Aorta (tissue), 5 donors: ENCODE measurements at regions of chr5 and their contacts with region 1.

Region 1: DNA sequence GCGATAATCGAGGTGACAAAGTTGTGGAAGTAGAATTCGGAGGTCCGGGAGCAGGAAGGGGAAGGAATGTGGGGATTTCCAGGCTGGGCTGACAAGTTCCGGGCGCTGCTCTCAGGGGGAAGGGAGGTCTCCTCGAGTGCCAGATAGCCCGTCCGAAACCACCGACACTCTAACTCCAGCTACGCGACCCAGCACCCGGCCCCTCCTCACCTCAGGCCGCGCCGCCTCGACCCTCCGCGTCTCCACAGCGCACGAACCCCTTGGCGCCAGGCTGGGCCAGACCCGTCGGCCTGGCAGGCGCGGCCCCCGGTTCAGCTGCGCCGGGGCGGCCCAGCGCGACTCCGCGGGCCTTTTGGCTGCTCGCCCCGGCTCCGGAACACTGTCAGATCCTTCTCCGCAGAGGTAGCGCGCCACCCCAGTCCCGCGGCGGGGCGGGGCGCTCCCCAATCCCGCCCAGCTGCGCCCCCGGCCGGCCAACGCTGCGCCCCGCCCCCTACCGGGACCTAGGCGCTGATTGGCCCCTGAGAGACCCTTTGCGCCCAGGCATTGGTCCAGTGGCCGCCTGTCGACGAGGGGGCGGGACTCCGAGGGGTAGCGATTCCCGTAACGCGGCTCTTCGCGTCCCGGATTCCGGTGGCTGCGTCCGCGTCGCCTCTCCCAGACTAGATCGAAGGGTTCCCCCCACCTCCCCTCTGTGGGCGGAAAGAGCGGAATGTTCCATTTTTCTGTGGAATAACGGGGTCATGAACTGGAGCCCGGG is at the start of gene IL6ST:
- DNase-seq: peak; percentile 99
- ATAC-seq: peak; percentile 98
- H3K4me3 ChIP-seq: peak within 1 kb of the TSS; percentile 34 to 86
- H3K27ac ChIP-seq: peak within 1 kb of the TSS; percentile 94 to 96
- H3K4me1 ChIP-seq: peaks cover under 1 to 1% of the 10 kb centered on the region in 2 donors
- H3K27me3 ChIP-seq: no peaks in the 10 kb centered on the region
- total RNA-seq, gene IL6ST: 353 to 370 TPM

Region 2: DNA sequence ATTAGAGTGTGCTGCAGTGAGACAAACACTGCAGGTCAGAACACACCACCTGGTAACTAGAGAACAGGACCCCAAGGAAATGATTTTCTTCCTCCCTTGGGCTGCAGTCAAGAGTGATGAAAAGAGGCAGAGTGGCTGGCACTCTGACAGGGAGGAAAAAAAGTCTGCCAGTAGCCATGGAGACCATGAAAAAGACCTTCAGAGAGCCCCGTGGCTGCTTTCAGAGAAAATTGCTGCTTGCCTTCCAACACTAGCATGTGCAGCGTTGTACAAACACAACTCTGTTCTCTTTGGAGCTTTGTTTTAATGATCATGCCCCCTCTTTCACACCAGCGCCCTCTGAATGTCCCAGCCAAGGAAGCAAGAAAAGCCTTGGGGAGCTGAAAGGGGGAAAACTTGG is 169.6 kb after region 1 on chr5:
- intact Hi-C with region 1: loop called in 1 of 2 experiments (anchors 10 kb)
- DNase-seq: no peak
- ATAC-seq: peak; percentile 27
- H3K4me3 ChIP-seq: no peak overlapping the region
- H3K27ac ChIP-seq: no peak overlapping the region
- H3K4me1 ChIP-seq: no peaks in the 10 kb centered on the region
- H3K27me3 ChIP-seq: no peaks in the 10 kb centered on the region

Region 3: DNA sequence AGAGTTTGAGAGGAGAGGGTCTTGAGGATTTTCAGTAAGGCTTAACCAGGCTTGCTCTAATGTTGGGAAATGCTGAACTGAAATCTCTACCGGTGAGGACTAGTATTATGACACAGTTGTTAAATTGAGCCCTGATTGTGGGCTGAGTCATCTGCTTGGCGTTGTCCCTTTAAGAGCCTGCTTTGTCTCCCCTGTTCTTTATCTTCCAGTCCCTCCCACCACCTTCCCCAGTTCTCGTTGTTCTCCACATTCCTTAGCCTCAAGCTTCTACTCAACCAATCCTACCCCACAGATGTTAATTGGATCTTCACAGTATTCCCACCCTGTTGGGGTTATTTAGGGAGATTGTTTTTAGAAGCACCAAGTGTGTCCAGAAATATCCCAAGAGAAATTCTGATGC is 180.7 kb after region 1 on chr5:
- intact Hi-C with region 1: loop called in 1 of 2 experiments (anchors 10 kb)
- DNase-seq: no peak
- ATAC-seq: peak; percentile 59
- H3K4me3 ChIP-seq: no peak overlapping the region
- H3K27ac ChIP-seq: no peak overlapping the region
- H3K4me1 ChIP-seq: peaks cover 0 to 5% of the 10 kb centered on the region in 2 donors
- H3K27me3 ChIP-seq: no peaks in the 10 kb centered on the region